Astrocyte of the cerebellum (primary cell): ENCODE measurements at regions of chr20 and their contacts with region 1.

Region 1: DNA sequence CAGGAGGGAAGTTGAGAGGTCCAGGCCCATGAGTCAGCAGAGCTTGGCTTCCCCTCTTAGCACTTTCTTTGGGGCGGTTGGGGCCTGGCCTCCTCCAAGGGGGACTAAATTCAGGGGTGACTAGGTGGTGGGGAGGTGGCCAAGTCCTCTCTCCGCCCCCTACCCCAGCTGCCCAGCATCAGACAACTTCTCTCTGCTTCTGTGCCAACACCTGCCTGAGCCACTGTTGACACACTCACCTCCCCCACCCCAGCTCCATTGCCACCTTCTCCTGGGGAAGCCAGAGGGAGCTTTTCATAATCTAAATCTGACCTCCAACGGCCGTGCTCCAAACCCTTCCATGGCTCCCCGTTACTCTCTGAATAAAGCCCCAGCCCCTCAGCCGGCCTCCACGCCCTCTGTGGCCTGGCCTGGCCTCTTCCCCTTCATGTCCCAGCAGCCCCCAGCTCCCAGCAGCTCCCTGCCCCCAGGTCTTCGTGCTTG is 70.2 kb downstream of the CEBPB start:
- DNase-seq: no peak
- H3K4me3 ChIP-seq: no peak overlapping the region
- CTCF ChIP-seq: no peak

Region 2: DNA sequence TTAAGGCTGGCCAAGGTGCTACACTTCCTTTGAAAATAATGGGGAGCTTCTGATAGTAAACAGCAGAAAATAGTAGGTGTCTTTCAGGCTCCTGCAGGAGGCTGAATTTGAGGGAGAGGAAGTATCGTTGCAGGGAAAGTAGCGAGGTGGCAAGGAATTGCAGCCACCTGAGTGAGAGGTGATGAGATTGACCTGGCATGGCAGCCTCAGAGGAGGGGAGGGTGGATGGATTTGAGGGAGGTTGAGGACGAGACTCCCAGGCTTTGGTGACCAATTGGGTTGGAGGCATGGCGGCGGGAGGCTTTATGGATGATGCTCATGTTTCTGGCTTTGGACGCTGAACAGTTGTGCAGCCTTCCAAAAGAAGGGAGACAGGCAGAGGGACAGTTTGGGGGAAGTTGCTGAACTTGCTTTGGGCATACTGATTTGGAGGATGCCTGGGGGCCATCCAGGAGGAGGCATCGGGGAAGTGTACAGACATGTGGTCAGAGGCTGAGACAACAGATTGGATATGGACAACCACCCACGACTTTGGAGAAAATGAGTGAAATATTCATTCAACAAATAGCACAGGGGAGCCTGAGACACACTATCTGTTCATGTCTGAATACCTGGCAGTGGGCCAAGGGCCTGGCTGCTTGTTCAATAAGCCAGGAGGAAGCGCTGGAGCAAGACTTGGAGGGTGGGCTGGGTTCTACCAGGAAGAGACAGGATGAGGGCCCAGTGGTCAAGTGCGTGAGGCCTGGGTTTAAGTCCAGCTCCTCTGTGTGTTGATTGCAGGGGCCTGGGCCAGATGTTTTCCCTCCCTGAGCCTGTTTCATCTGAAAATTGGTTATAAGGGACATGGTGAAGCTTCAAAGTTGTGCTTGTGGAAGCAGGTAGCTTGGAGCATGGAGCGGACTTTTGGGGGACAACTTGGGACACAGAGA is 43.1 kb after region 1 on chr20:
- in situ Hi-C with region 1: loop called (anchors 5 kb)
- DNase-seq: no peak
- H3K4me3 ChIP-seq: no peak overlapping the region
- CTCF ChIP-seq: no peak